ENCODE measurements at regions of chr17 and their contacts with region 1.

Region 1: DNA sequence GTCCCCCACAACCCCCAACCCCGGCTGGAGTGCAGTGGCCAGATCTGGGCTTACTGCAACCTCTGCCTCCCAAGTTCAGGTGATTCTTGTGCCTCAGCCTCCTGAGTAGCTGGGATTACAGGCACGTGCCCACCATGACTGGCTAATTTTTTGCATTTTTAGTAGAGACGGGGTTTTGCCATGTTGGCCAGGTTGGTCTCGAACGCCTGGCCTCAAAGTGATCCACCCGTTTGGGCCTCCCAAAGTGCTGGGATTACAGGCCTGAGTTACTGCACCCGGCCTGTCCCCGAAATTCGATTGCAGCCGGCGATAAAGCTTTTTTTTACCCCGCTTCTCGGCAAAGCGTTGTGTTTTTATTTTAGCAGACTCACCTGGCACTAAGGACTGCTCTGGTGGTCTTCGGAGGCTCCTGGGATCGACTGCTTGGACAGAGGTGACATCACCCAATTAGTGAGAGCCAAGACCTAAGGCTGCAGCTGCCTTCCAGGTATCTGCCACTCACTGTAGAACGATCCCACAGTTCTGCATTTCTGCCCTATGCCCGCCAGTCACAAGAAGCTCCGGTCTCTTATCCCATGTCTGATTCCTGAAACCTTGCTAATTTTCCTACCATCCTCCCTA is 82.2 kb upstream of the ARL4D start:
- DNase-seq: peak; percentile 13 to 62 (median 28)
- H3K4me3 ChIP-seq: no peak overlapping the region
- H3K4me3 Mint-ChIP-seq: peak overlapping the region in 5 of 7 donors; percentile 16 to 74 (median 38)
- H3K27ac ChIP-seq: no peak overlapping the region
- H3K27ac Mint-ChIP-seq: peak overlapping the region in 6 of 8 donors; percentile 10 to 72 (median 37)
- H3K4me1 ChIP-seq: no peaks in the 10 kb centered on the region
- H3K4me1 Mint-ChIP-seq: peaks cover 2 to 15% (median 12%) of the 10 kb centered on the region in 3 donors
- H3K27me3 ChIP-seq: no peaks in the 10 kb centered on the region
- H3K27me3 Mint-ChIP-seq: no peaks in the 10 kb centered on the region

Region 2: GRCh38 chr17:43140396-43141332 is 176.0 kb before region 1 on chr17:
- CTCF ChIA-PET with region 1: no interaction called
- POLR2A ChIA-PET with region 1: no interaction called
- DNase-seq: no peak
- H3K4me3 ChIP-seq: no peak overlapping the region
- H3K4me3 Mint-ChIP-seq: no peak overlapping the region
- H3K27ac ChIP-seq: no peak overlapping the region
- H3K27ac Mint-ChIP-seq: peak overlapping the region in 2 of 8 donors; percentile 11 to 32
- H3K4me1 ChIP-seq: no peaks in the 10 kb centered on the region
- H3K4me1 Mint-ChIP-seq: peaks cover 4 to 6% (median 5%) of the 10 kb centered on the region in 3 donors
- H3K27me3 ChIP-seq: no peaks in the 10 kb centered on the region
- H3K27me3 Mint-ChIP-seq: no peaks in the 10 kb centered on the region

Region 3: DNA sequence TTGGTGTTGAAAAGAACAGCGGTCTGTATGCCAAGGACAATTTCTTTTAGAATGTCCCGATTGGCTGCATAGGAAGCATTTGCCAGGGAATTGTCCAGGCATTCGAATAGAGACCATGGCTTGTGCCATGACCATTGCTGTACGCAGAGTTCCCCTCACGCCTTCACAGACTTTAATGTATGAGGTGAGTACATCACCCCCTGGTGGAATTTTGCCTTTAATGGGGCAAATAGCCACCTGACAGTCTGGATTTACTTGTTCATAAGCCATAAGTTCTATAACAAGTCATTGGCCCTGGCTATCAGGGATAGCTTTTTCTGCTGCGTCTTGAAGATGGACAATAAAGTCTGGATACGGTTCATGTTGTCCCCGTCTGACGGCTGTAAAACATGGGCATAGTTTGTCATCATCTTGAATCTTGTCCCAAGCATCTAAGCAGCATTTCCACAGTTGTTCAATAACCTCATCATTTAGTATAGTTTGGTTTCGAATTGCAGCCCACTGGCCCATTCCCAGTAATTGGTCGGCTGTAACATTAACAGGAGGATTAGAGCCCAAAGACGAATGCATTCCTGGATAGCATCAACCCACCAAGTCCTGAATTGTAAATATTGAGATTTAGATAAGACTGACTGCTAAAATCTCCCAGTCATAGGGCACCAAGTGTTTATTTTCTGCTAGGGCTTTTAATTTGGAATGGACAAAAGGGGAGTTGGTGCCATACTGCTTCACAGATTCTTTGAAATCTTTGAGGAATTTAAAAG is 14.4 kb after region 1 on chr17:
- CTCF ChIA-PET with region 1: interaction called, 12 read pairs
- POLR2A ChIA-PET with region 1: interaction called, 8 read pairs
- DNase-seq: no peak
- H3K4me3 ChIP-seq: no peak overlapping the region
- H3K4me3 Mint-ChIP-seq: no peak overlapping the region
- H3K27ac ChIP-seq: no peak overlapping the region
- H3K27ac Mint-ChIP-seq: no peak overlapping the region
- H3K4me1 ChIP-seq: peaks cover 6% of the 10 kb centered on the region
- H3K4me1 Mint-ChIP-seq: peaks cover 6 to 9% (median 7%) of the 10 kb centered on the region in 3 donors
- H3K27me3 ChIP-seq: no peaks in the 10 kb centered on the region
- H3K27me3 Mint-ChIP-seq: peaks cover 15 to 36% of the 10 kb centered on the region in 2 donors